ENCODE measurements at regions of chr2 and their contacts with region 1.

Region 1: GRCh38 chr2:12716282-12717190 is at the start of gene TRIB2:
- DNase-seq: peak; percentile 91
- H3K4me3 Mint-ChIP-seq: peak within 1 kb of the TSS; percentile 89
- H3K27ac Mint-ChIP-seq: peak within 1 kb of the TSS; percentile 92
- H3K4me1 Mint-ChIP-seq: peaks cover 46% of the 10 kb centered on the region
- H3K27me3 Mint-ChIP-seq: peaks cover 6% of the 10 kb centered on the region
- total RNA-seq, gene TRIB2: 62.8 to 68.3 TPM

Region 2: DNA sequence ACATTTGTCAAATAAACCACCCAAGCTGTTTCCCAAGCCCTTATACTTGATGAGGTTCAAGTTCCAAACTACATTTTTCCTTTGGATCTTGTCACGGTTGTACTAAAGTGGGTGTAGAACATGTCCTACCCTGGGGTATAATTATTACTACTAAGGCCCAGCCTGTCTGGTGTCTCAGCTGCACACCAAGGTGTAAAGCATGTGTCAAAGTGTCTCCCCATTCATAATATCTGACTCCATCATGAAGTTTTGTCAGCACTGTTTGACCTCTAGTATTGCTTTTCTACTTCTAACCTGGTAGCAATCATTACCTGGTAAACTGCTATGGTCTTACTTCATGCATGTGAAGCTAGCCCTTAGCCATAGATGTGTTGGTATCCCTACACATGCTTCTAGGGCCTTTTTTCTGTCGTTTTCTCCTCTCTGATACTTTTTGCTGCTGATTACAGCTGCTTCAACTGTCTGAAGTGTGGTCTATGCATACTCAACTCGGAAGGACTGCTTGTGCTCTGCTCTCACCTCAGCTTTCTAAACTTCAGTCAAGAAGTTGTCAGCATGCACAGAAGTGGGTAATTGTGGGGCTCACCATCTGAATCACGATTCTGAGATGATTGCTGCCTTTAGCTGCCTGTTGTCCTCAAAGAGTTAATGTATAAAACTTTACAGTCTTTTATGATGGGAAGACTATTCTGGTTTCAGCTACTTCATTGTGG is 445.5 kb before region 1 on chr2:
- CTCF ChIA-PET with region 1: interaction called, 12 read pairs
- POLR2A ChIA-PET with region 1: interaction called, 8 read pairs
- DNase-seq: peak; percentile 22
- H3K4me3 Mint-ChIP-seq: no peak overlapping the region
- H3K27ac Mint-ChIP-seq: peak overlapping the region; percentile 38
- H3K4me1 Mint-ChIP-seq: peaks cover 21% of the 10 kb centered on the region
- H3K27me3 Mint-ChIP-seq: peaks cover 2% of the 10 kb centered on the region

Region 3: DNA sequence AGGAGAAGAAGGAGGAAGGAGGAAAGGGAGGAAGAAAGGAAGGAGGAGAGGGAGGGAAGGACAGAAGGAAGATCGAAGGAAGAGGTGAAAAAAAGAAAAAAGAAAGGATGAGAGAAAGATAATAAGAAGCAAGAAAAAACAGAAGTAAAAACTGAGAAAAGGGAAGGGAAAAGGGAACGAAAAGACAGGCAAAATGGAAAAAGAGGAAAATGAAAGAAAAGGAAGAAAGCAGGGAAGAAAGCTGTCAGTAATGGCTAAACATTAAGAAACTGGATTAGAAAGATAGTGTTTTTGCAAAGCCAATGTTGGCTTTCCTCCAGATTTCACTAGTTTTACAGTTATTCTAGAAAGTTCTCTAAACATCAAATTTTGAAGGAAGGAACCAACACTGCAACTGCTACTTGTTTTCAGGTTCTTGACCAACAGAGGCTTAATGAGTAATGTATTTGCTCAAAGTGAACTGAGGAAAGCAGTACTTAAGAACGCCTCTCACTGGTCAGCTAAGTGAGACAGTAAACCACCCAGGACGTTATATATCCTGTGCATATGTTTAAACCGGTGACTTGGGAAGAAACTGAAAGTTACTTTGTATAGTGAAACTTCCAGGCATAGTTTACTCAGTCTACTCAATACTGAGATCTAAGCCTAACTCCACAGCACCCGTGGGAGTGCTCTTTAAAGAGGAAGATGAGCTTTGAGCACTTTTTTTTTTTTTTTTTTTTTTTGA is 286.0 kb before region 1 on chr2:
- CTCF ChIA-PET with region 1: interaction called, 29 read pairs
- POLR2A ChIA-PET with region 1: interaction called, 19 read pairs
- DNase-seq: peak; percentile 20
- H3K4me3 Mint-ChIP-seq: peak overlapping the region; percentile 68
- H3K27ac Mint-ChIP-seq: peak overlapping the region; percentile 67
- H3K4me1 Mint-ChIP-seq: peaks cover 29% of the 10 kb centered on the region
- H3K27me3 Mint-ChIP-seq: no peaks in the 10 kb centered on the region

Region 4: DNA sequence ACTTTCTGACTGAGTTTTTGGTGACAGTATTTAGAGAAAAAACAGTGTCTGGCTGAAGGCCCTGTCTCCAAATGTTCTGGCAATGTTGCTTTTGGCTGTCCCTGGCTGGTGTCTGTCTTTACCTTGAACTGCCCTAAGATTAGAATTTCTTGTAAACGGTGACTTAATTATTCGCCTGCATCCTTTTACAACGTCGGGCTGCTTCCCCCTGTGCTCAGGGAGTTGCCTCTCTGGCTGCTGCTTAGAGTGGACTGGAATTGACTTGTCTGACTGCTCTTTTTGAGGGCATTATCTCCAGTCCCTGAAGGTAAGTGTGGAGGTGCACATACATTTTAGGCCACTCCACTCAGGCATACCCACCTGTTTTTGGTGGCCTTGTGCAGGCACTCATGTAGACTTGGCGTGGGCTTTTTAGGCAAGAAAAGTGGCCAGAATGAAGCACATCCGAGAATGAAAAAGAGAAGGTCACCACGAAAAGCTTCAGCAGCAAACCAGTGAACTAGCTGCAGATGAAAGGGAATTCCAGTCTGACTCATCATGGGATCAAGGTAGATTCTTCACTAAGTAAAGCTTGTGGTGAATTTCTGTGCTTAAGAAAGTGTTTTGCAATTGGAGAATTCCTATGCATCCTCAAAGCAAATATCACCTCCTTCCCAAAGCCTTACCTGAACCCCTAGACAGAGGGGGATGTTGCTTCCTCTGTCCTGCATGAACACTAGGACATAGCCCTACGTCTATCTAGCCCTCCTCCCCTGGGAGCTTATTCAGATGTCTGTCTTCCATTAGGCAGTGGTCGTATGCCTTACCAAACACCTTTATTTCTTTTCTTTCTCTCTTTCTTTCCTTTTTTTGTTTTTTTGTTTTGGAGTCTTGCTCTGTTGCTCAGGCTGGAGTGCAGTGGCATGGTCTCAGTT is 230.1 kb before region 1 on chr2:
- CTCF ChIA-PET with region 1: interaction called, 11 read pairs
- POLR2A ChIA-PET with region 1: interaction called, 11 read pairs
- DNase-seq: no peak
- H3K4me3 Mint-ChIP-seq: no peak overlapping the region
- H3K27ac Mint-ChIP-seq: no peak overlapping the region
- H3K4me1 Mint-ChIP-seq: peaks cover 62% of the 10 kb centered on the region
- H3K27me3 Mint-ChIP-seq: no peaks in the 10 kb centered on the region

Region 5: GRCh38 chr2:12552092-12552491 is 164.4 kb before region 1 on chr2:
- CTCF ChIA-PET with region 1: interaction called, 10 read pairs
- POLR2A ChIA-PET with region 1: interaction called, 5 read pairs
- DNase-seq: no peak
- H3K4me3 Mint-ChIP-seq: no peak overlapping the region
- H3K27ac Mint-ChIP-seq: no peak overlapping the region
- H3K4me1 Mint-ChIP-seq: peaks cover 30% of the 10 kb centered on the region
- H3K27me3 Mint-ChIP-seq: no peaks in the 10 kb centered on the region

Region 6: GRCh38 chr2:12787891-12788801 is 71.6 kb after region 1 on chr2:
- CTCF ChIA-PET with region 1: no interaction called
- POLR2A ChIA-PET with region 1: no interaction called
- DNase-seq: no peak
- H3K4me3 Mint-ChIP-seq: no peak overlapping the region
- H3K27ac Mint-ChIP-seq: no peak overlapping the region
- H3K4me1 Mint-ChIP-seq: no peaks in the 10 kb centered on the region
- H3K27me3 Mint-ChIP-seq: peaks cover 4% of the 10 kb centered on the region

Region 7: DNA sequence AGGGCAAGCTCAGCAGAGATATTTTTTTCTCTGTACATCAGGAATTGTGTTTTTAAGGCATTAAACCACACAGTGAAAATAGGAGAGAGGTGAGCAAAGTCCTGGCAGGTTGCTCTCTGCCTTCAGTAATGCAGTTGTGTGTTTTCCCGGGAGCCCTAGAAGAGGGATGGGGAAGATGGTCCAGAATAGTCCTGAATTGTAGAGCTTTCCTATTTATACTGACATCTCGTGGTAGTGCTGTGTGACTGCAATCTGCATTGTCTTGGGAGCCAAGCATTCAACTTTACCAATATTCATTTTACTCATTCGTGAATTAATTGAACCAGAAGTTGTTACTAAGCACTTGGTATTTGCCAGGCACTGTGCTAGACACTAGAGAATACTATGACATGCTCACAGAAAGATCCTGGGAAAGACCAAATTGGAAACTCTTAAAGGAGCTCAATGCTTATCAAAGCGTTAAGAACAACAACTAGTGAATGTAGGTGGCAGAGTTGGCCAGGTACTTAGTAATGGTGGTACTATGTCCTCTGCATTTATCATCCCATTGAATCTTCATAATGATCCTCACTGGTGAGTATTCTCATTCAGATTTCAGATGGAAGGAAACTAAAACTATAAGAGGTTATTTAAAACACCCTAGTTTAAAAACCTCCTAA is 214.8 kb after region 1 on chr2:
- CTCF ChIA-PET with region 1: interaction called, 29 read pairs
- POLR2A ChIA-PET with region 1: interaction called, 12 read pairs
- DNase-seq: no peak
- H3K4me3 Mint-ChIP-seq: no peak overlapping the region
- H3K27ac Mint-ChIP-seq: no peak overlapping the region
- H3K4me1 Mint-ChIP-seq: peaks cover 11% of the 10 kb centered on the region
- H3K27me3 Mint-ChIP-seq: peaks cover 21% of the 10 kb centered on the region